AG04450 (cell line): ENCODE measurements at regions of chr6 and their contacts with region 1.

Region 1: DNA sequence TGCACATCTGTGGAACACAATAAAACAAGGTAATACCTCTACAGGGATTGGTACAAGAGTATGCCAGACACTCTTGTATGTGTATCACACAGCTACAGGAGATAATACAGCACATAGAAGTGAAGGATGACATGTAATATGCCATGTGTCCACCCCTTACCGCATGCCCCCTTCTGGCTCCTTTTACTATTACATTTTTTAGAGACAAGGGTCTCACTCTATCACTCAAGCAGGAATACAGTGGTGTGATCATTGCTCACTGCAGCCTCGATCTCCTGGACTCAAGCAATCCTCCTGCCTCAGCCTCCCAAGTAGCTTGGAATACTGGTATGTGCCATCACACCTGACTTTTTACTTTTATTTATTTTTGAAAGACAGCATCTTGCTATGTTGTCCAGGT is 4.2 kb upstream of the NCR3 start:
- DNase-seq: no peak
- H3K4me3 ChIP-seq: no peak overlapping the region
- H3K27ac ChIP-seq: no peak overlapping the region
- H3K27me3 ChIP-seq: no peaks in the 10 kb centered on the region
- CTCF ChIP-seq: peak; percentile 47

Region 2: GRCh38 chr6:31163922-31164321 is 433.1 kb before region 1 on chr6:
- CTCF ChIA-PET with region 1: no interaction called
- POLR2A ChIA-PET with region 1: no interaction called
- DNase-seq: no peak
- H3K4me3 ChIP-seq: no peak overlapping the region
- H3K27ac ChIP-seq: no peak overlapping the region
- H3K27me3 ChIP-seq: no peaks in the 10 kb centered on the region
- CTCF ChIP-seq: no peak

Region 3: GRCh38 chr6:31493875-31494694 is 102.9 kb before region 1 on chr6:
- CTCF ChIA-PET with region 1: interaction called, 17 read pairs
- POLR2A ChIA-PET with region 1: interaction called, 6 read pairs
- DNase-seq: no peak
- H3K4me3 ChIP-seq: peak overlapping the region; percentile 71
- H3K27ac ChIP-seq: peak overlapping the region; percentile 78
- H3K27me3 ChIP-seq: no peaks in the 10 kb centered on the region
- CTCF ChIP-seq: peak; percentile 87

Region 4: DNA sequence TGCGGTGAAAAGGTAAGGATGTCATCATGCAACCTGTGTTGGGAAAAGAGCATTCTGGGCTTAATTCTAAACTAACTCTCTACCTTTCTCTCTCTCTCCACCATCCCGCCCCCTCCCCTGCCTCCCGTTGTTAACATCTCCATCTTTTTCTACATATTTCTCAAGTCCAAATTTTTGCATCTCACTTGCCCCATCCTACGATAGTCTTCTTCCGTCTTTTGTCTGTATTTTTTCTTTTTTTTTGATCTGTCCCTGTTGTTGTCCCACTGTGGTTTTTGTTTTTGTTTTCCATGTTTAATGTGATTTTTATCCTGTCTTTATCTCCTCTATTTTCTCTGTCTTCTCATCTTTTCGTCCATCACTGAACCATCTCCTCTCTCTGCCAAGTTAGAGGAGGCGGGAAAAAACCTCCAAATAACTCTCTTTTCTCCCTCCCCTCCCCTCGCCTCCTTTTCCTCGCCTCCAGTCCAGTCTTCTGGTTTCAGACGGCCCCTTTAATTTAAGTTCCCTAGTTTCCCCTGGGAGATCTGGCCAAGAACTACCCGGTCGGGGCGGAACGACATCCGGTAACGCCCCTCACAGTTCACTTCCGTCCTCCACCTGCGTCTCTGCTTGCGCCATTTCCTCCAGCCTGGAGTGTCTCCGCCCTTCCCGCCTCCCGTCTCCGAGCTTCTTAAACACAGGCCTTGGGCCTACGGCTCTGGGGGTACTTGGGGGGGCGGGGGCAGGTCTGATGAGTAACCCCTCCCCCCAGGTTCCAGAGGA is 49.9 kb before region 1 on chr6 and contains the start of gene NFKBIL1:
- CTCF ChIA-PET with region 1: interaction called, 388 read pairs
- POLR2A ChIA-PET with region 1: interaction called, 17 read pairs
- DNase-seq: peak; percentile 94
- H3K4me3 ChIP-seq: peak within 1 kb of the TSS; percentile 75
- H3K27ac ChIP-seq: peak within 1 kb of the TSS; percentile 52
- H3K27me3 ChIP-seq: no peaks in the 10 kb centered on the region
- CTCF ChIP-seq: no peak
- polyA plus RNA-seq, gene NFKBIL1: 5.1 and 5.4 TPM in 2 replicates

Region 5: DNA sequence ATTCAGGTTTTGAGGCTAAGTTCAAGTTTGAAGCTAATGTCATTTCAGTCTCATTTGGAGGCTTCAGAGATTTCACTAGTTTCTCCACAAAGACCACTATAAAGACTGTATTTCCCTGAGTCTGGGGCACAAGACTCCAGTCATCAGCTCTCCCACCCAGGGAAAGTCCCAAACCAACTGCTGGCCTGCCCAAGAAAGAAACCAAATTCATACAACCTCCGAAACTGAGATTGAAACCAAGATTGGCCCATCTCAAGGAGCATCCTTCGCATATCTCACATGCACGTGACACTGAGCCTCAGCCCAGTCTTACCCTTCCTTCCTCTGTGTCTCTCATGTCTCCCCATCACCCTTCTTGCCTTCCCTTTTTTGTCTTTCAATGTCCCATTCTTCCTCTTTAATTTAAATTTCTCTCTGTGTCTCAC is 28.5 kb before region 1 on chr6:
- CTCF ChIA-PET with region 1: interaction called, 16 read pairs
- POLR2A ChIA-PET with region 1: no interaction called
- DNase-seq: no peak
- H3K4me3 ChIP-seq: no peak overlapping the region
- H3K27ac ChIP-seq: no peak overlapping the region
- H3K27me3 ChIP-seq: peaks cover 21% of the 10 kb centered on the region
- CTCF ChIP-seq: no peak

Region 6: DNA sequence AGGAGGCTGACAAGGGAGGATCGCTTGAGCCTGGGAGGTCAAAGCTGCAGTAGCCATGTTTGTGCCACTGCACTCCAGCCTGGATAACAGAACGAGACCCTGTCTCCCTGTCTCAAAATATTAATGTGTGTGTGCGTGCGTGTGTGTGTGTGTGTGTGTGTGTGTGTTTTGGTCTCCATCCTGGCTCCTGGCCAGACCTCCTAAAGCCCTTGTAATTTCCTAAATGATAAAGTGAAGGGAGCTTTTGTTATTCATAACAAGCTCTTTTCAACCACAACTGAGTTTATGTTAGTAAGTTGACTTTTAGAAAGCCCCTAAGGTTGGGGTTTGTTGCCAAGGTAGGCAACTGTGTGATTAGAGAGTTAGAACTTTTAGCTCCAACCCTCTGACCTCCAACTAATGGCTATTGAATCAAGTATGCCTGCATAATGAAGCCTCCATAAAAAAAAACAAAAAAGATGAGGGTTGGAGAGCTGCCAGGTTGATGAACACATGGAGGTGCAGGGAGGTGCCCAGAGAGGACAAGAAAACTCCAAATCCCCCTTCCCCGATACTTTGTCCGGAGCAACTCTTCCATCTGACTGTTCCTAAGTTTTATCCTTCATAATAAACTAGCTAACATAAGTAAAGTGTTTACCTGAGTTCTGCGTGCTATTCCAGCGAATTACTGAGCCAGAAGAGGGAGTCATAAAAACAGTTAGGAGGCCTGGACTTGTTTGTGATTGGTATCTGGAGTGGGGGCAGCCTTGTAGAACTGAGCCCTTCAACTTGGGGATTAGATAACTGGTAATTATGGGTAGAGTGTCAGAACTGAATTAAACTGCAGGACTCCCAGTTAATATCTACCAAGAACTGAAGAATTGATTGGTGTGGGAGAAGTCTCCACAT is 12.8 kb after region 1 on chr6:
- CTCF ChIA-PET with region 1: interaction called, 22 read pairs
- POLR2A ChIA-PET with region 1: no interaction called
- DNase-seq: no peak
- H3K4me3 ChIP-seq: no peak overlapping the region
- H3K27ac ChIP-seq: no peak overlapping the region
- H3K27me3 ChIP-seq: peaks cover 6% of the 10 kb centered on the region
- CTCF ChIP-seq: no peak